CD14-positive monocyte (primary cell): ENCODE measurements at regions of chr3 and their contacts with region 1.

Region 1: GRCh38 chr3:171829841-171830517 is 13.2 kb upstream of the TMEM212 start:
- DNase-seq: peak; percentile 20 to 74 (median 60)
- H3K4me3 ChIP-seq: no peak overlapping the region
- H3K4me3 Mint-ChIP-seq: no peak overlapping the region
- H3K27ac ChIP-seq: peak overlapping the region; percentile 52 to 87
- H3K27ac Mint-ChIP-seq: peak overlapping the region; percentile 94 to 99 (median 99)
- H3K4me1 ChIP-seq: peaks cover 43 to 52% of the 10 kb centered on the region in 2 donors
- H3K4me1 Mint-ChIP-seq: peaks cover 52% of the 10 kb centered on the region
- H3K27me3 ChIP-seq: no peaks in the 10 kb centered on the region
- H3K27me3 Mint-ChIP-seq: peaks cover 0 to 2% (median 0%) of the 10 kb centered on the region in 3 donors
- CTCF ChIP-seq: peak; percentile 63

Region 2: DNA sequence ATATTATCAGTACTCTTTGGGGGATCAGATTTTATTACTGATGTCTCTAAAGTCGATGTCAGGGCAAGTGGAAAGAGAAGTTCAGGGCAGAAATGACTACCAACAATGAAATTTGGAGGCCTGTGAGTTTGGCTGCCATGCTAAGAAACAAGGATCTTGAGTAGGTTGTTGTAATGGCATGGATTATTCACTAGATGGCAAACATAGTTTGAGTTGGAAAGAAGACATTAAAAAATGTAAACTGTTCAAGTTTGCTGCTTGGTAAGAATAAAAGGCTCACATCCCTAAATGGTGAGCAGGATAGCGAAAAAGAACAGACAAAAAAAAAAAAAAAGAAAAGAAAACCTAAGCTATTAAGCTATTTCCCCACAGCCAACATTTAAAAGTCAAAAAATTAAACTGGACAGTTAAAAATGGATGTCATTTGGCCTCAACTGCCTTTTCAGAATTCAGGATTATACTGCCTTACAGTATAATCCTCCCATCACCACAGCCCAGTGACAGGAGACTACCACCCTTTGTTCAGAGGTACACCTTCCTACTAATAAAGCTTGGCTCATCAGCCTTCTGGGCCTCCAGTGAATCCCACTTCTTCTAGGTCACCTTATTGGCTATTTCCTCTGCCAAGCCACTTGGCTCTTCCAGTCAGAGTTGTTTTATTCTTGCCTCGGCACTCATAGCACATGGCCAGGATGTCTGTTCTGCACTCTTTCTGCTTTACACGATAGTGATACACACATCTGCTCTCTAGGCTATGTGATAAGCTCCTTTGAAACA is 183.4 kb before region 1 on chr3:
- intact Hi-C with region 1: loop called in 1 of 2 experiments (anchors 10 kb)
- DNase-seq: peak; percentile 3 to 19 (median 18)
- H3K4me3 ChIP-seq: no peak overlapping the region
- H3K4me3 Mint-ChIP-seq: no peak overlapping the region
- H3K27ac ChIP-seq: peak overlapping the region in 1 of 2 donors; percentile 41
- H3K27ac Mint-ChIP-seq: no peak overlapping the region
- H3K4me1 ChIP-seq: peaks cover 0 to 3% of the 10 kb centered on the region in 2 donors
- H3K4me1 Mint-ChIP-seq: peaks cover 14% of the 10 kb centered on the region
- H3K27me3 ChIP-seq: no peaks in the 10 kb centered on the region
- H3K27me3 Mint-ChIP-seq: no peaks in the 10 kb centered on the region
- CTCF ChIP-seq: peak; percentile 64

Region 3: DNA sequence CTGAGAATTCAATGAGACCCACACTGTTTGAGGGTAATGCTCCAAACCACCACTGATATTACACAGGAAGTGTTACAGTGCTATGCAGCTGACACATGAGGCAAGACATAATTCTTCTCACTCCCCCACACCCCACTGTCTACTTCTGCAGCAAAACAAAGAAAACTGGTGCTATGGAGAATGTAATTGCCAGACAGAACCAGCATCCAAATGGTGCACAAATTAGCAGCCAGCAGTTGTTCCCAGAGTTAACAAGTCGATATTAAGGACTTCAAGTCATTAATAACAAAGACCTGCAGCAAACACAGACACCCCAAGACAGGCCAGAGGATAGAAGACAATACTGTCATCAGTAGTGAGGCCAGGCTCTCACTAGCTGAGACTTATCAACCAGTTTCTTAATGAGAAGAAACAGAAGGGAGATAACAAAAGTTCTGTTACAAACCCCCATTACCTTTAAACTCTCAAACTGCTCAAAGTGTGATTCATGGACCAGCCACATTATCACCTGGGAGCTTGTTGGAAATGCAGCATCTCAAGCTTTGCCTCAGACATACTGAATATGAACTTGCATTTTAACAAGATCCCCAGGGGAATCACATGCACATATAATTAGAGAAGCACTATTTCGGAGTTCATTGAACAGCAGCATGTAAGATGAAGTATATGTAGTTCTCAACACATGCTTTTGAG is 150.7 kb after region 1 on chr3:
- intact Hi-C with region 1: no loop called
- DNase-seq: peak; percentile 36 to 59 (median 46)
- H3K4me3 ChIP-seq: peak overlapping the region in 1 of 3 experiments; percentile 1
- H3K4me3 Mint-ChIP-seq: no peak overlapping the region
- H3K27ac ChIP-seq: peak overlapping the region in 1 of 2 donors; percentile 85
- H3K27ac Mint-ChIP-seq: peak overlapping the region in 6 of 7 donors; percentile 78 to 91 (median 84)
- H3K4me1 ChIP-seq: peaks cover 91 to 100% of the 10 kb centered on the region in 2 donors
- H3K4me1 Mint-ChIP-seq: peaks cover 75% of the 10 kb centered on the region
- H3K27me3 ChIP-seq: no peaks in the 10 kb centered on the region
- H3K27me3 Mint-ChIP-seq: no peaks in the 10 kb centered on the region
- CTCF ChIP-seq: no peak